ENCODE measurements at regions of chr12 and their contacts with region 1.

Region 1: GRCh38 chr12:26937875-26938700 is at the starts of genes FGFR1OP2 and INTS13:
- DNase-seq: peak; percentile 100
- total RNA-seq, gene FGFR1OP2: 46.1 to 48.6 TPM
- total RNA-seq, gene INTS13: 15.1 to 23.0 TPM

Region 2: GRCh38 chr12:25960143-25960542 is 977.9 kb before region 1 on chr12:
- intact Hi-C with region 1: loop called in 1 of 2 experiments (anchors 10 kb)
- DNase-seq: no peak

Region 3: DNA sequence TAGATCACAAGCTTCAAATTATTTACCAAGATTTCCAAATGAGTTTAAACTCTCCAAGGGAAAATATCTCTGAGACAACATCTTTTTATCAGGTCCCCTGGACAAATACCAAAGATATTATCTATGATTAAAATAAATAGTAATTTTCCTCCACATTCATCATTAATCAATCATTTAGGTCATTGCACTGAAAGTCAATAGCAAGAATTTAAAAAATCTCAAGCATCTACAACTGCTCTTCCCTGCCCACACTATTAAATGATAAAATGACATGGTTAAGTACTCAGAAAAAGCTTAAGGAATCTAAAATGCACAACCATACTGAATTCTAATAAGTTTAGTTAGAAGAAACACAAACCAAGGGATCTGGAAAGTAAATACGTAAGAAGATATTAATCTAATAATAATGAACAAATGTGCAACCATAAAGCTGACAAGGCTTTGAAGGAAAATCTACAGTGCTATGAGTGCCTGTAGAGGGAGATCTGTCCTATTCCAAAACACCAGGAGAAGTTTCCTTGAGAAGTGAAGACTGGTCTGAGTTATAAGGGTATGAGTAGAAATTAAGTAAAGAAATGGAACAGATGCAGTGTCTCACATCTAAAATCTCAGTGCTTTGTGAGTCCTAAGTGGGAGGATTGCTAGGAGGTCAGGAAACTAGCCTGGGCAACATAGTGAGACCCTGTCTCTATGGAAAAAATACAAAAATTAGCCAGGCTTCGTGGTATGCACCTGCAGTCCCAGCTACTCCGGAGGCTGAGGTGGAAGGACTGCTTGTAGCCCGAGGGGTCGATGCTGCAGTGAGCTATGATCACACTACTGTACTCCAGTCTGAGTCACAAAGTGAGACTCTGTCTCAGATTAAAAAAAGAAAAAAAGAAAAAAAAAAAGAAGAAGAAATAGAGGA is 19.5 kb before region 1 on chr12:
- intact Hi-C with region 1: no loop called
- DNase-seq: no peak

Region 4: DNA sequence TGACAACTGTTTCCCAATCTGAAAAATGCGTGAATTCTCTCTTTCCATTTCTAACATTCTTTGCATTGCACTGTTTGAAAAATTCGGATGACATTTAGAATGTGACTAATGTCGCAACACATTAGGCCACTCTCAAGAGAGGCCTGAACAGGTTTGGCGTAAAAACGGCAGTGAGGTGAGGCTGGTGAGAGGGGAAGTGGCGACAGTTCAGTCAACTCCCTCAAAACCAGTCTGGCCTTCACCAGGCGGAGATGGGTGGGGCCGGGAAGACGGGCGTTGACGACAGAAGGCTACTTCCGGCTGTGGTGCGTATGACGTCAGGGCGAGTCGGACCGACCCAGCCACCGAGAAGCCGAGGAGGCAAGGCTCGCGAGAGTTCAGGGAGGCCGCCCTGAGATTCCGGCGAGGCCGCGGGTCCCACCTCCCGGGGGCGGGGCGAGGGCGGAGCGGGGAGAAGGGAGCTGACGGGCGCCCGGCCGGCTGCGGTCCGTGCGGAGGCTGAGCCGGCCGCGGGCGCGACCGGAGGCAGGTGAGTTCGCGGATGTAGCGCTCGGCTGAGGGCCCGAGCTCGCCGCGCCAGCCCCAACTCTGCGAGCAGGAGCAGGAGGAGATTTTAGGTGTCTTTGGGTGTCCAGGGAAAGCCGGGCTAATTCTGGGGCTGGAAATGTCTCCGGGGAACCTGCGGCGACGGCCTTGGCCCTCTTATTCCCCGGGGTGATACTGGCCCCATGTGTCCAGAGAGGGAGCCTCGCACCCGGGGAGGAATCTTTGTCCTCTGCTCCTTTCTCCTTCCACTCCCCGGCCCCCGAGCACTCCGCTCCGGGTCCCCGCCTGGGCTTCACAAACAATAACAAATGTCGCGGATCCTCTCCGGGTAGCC is 306.0 kb after region 1 on chr12 and contains the start of gene STK38L:
- intact Hi-C with region 1: loop called in 1 of 2 experiments (anchors 5 kb)
- DNase-seq: peak; percentile 100
- total RNA-seq, gene STK38L: 93.3 to 221 TPM

Region 5: DNA sequence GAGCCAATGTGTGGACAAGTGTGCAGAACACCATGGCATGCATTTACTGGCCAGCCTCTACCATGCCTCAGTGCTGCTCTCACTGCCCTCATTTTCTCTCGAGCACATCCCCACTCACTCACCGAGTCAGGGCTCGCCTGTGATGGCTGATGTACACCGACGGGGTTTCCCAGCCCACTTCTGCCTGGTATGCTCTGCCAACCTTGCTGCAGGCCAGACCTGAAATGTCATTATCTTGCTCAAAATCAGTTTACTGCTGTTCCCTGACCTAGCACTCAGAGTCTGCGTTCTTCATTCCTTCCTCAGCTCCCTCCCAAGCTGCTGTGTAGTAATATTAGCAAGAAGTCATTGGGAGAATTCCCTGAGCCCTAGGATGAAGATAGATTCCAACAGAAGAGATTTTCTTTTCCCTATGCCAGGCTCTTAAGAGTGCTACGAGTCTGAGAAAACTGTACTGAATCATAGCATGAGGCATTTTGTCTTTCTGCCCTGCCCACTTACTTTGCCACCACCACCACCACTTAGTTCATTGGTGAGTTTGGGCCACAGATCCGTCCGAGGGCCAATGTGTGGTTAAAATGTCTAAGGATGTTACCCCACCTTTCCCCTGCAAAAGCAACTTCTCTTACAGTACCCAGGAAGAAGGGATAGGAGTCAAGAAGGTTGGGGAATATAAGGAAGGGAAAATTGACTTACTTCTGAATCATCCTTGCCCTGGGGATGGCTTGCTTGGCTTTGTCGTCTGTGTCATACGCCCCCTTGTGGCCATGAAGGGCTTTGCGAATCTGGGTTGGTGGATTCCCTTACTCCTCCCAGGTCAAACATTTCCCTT is 445.6 kb after region 1 on chr12:
- intact Hi-C with region 1: loop called in 1 of 2 experiments (anchors 5 kb)
- DNase-seq: peak; percentile 94